ENCODE measurements at regions of chr6 and their contacts with region 1.

Region 1: GRCh38 chr6:24205020-24205492 is 79.0 kb downstream of the NRSN1 start:
- DNase-seq: no peak
- H3K4me3 Mint-ChIP-seq: no peak overlapping the region
- H3K27ac Mint-ChIP-seq: no peak overlapping the region
- H3K4me1 Mint-ChIP-seq: no peaks in the 10 kb centered on the region
- H3K27me3 Mint-ChIP-seq: peaks cover 2% of the 10 kb centered on the region

Region 2: DNA sequence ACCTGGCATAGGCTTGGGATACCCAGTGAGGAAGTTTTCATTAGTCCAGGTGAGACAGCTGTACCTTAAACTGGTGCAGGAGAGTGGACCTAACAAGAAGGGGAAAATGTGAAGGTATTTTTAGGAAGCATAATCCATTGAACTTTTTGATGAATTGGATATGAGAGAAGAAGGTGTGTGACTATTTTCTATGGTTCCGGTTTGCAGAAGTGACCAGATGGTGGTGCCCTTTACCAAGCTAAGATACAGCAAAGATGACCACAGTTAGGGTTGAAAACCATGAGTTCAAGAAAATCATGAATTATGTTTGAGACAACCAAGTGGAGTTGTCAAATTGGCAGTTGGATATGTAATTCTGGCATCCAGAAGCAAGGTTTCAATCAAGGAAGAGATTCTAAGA is 141.0 kb before region 1 on chr6:
- intact Hi-C with region 1: loop called (anchors 10 kb)
- DNase-seq: no peak
- H3K4me3 Mint-ChIP-seq: no peak overlapping the region
- H3K27ac Mint-ChIP-seq: no peak overlapping the region
- H3K4me1 Mint-ChIP-seq: no peaks in the 10 kb centered on the region
- H3K27me3 Mint-ChIP-seq: no peaks in the 10 kb centered on the region

Region 3: DNA sequence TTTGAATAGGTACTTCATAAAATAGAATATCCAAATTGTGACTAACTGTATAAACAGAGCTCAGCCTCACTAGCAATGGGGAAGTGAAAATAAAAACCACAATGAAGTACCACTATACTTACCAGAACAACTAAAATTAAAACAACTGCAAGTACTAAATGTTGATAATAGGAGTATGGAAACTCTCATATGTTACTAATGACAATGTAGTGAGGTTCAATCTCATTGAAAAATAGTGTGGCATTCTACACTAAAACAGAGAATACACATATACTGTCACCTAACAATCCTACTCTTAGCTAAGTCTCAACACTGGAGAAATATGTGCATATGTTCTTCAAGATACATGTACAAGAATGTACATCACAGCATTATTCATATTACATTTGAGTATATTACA is 942.2 kb after region 1 on chr6:
- intact Hi-C with region 1: no loop called
- DNase-seq: no peak
- H3K4me3 Mint-ChIP-seq: peak overlapping the region; percentile 24
- H3K27ac Mint-ChIP-seq: peak overlapping the region; percentile 74
- H3K4me1 Mint-ChIP-seq: peaks cover 68% of the 10 kb centered on the region
- H3K27me3 Mint-ChIP-seq: no peaks in the 10 kb centered on the region

Measured in activated T-helper 2 cell treated with anti-CD3 and anti-CD28 coated beads, Interferon-gamma antibody, Interleukin-2, Interleukin-4, amounts not matched to agents 10 μg/mL and 5 μg/mL and 100 μg/mL, durations not matched to agents 14 hours and 24 hours and 36 hours (primary cell).